Mammary epithelial cell (primary cell): ENCODE measurements at regions of chr1 and their contacts with region 1.

Region 1: GRCh38 chr1:25572708-25573600 is 29.5 kb downstream of the LDLRAP1 start:
- DNase-seq: peak; percentile 32
- H3K4me3 ChIP-seq: no peak overlapping the region
- H3K27ac ChIP-seq: no peak overlapping the region
- H3K4me1 ChIP-seq: peaks cover 26% of the 10 kb centered on the region
- H3K27me3 ChIP-seq: no peaks in the 10 kb centered on the region
- CTCF ChIP-seq: peak; percentile 74 to 85

Region 2: GRCh38 chr1:25430666-25431505 is 142.1 kb before region 1 on chr1 and contains the start of gene MACO1:
- CTCF ChIA-PET with region 1: no interaction called
- dilution Hi-C with region 1: no loop called
- in situ Hi-C with region 1: no loop called
- intact Hi-C with region 1: loop called (anchors 2 kb)
- DNase-seq: peak; percentile 94
- H3K4me3 ChIP-seq: peak within 1 kb of the TSS; percentile 72 to 91 (median 87)
- H3K27ac ChIP-seq: peak within 1 kb of the TSS; percentile 88
- H3K4me1 ChIP-seq: peaks cover 14% of the 10 kb centered on the region
- H3K27me3 ChIP-seq: no peaks in the 10 kb centered on the region
- CTCF ChIP-seq: no peak
- total RNA-seq, gene MACO1: 16.8 to 17.4 TPM

Region 3: GRCh38 chr1:25503551-25504426 is 69.2 kb before region 1 on chr1:
- CTCF ChIA-PET with region 1: no interaction called
- dilution Hi-C with region 1: no loop called
- in situ Hi-C with region 1: no loop called
- intact Hi-C with region 1: loop called (anchors 5 kb)
- DNase-seq: peak; percentile 21
- H3K4me3 ChIP-seq: no peak overlapping the region
- H3K27ac ChIP-seq: no peak overlapping the region
- H3K4me1 ChIP-seq: no peaks in the 10 kb centered on the region
- H3K27me3 ChIP-seq: no peaks in the 10 kb centered on the region
- CTCF ChIP-seq: peak; percentile 56 to 75

Region 4: GRCh38 chr1:25529518-25530185 is 43.3 kb before region 1 on chr1:
- CTCF ChIA-PET with region 1: no interaction called
- dilution Hi-C with region 1: no loop called
- in situ Hi-C with region 1: no loop called
- intact Hi-C with region 1: loop called (anchors 5 kb)
- DNase-seq: no peak
- H3K4me3 ChIP-seq: no peak overlapping the region
- H3K27ac ChIP-seq: no peak overlapping the region
- H3K4me1 ChIP-seq: peaks cover 3% of the 10 kb centered on the region
- H3K27me3 ChIP-seq: no peaks in the 10 kb centered on the region
- CTCF ChIP-seq: no peak

Region 5: DNA sequence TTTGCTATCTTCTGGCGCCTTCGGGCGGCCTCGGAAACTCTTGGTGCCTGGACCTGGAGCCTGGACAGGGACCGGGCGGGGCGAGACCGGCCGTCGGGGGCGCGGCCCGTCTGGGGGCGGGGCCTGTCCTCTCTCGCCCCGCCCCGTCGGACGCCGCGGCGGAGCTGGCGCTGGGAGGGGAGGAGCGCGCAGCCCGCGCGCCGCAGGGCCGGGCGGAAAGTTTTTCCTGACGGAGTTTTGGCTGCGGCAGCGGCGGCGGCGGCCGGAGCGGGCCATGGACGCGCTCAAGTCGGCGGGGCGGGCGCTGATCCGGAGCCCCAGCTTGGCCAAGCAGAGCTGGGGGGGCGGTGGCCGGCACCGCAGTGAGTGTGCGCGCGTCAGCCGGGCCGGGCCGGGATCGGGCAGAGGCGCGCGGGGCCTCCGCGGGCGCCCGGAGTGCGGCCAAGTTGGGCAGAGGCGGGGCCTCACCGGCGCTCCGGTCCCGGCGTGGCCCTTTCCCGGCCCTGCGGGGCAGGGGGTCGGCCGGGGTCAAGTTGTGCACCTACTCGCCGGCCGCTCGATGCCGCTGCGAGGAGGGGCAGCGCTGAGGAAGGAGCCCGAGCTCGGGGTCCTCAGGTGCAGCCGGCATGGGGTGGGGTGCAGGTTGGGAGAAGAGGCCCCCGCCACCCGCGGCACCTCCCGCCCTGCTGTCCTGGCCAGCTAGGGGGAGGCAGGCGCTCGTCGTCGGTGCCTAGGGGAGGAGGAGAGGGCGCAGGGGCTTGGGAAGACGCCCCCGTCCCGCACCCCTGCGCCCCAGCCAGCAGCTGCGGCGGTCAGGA is 29.3 kb before region 1 on chr1 and contains the start of gene LDLRAP1:
- CTCF ChIA-PET with region 1: interaction called, 3 read pairs
- dilution Hi-C with region 1: no loop called
- in situ Hi-C with region 1: no loop called
- intact Hi-C with region 1: loop called (anchors 1 kb)
- DNase-seq: peak; percentile 70
- H3K4me3 ChIP-seq: peak within 1 kb of the TSS; percentile 74 to 86 (median 84)
- H3K27ac ChIP-seq: peak within 1 kb of the TSS; percentile 3
- H3K4me1 ChIP-seq: peaks cover 8% of the 10 kb centered on the region
- H3K27me3 ChIP-seq: no peaks in the 10 kb centered on the region
- CTCF ChIP-seq: no peak
- total RNA-seq, gene LDLRAP1: 23.0 to 32.7 TPM